CD14-positive monocyte (primary cell): ENCODE measurements at regions of chr13 and their contacts with region 1.

Region 1: GRCh38 chr13:99176309-99177276 is 24.1 kb upstream of the UBAC2 start:
- DNase-seq: peak; percentile 58 to 72 (median 67)
- H3K4me3 ChIP-seq: no peak overlapping the region
- H3K4me3 Mint-ChIP-seq: peak overlapping the region; percentile 61 to 62
- H3K27ac ChIP-seq: no peak overlapping the region
- H3K27ac Mint-ChIP-seq: peak overlapping the region in 2 of 7 donors; percentile 13 to 48
- H3K4me1 ChIP-seq: peaks cover 33 to 37% of the 10 kb centered on the region in 2 donors
- H3K4me1 Mint-ChIP-seq: peaks cover 48% of the 10 kb centered on the region
- H3K27me3 ChIP-seq: peaks cover 23 to 42% of the 10 kb centered on the region in 2 donors
- H3K27me3 Mint-ChIP-seq: peaks cover 46 to 49% (median 48%) of the 10 kb centered on the region in 3 donors
- CTCF ChIP-seq: peak; percentile 99

Region 2: DNA sequence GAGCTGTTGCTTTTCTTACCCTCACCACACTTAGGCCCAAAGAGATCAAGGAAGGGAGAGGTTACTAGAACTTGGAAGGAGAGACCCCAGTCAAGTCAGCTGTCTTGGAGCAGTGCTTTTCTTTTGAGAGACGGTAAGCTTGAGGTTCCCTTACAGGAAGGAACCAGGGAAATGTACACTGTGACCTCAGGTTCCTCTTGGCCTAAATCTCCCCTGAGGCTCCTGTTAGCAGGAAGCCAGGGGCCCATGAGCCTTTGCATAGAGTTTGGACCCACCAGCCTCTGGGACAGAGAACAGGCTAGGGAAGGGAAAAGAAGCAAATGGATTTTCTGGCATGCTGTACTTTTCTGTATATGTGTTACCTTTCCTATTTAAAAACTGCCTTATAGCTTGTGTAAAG is 87.5 kb after region 1 on chr13:
- intact Hi-C with region 1: loop called (anchors 1 to 2 kb)
- DNase-seq: peak in 2 of 3 donors; percentile 33 to 44
- H3K4me3 ChIP-seq: no peak overlapping the region
- H3K4me3 Mint-ChIP-seq: no peak overlapping the region
- H3K27ac ChIP-seq: peak overlapping the region; percentile 9 to 52
- H3K27ac Mint-ChIP-seq: peak overlapping the region in 5 of 7 donors; percentile 13 to 87 (median 76)
- H3K4me1 ChIP-seq: peaks cover 31 to 49% of the 10 kb centered on the region in 2 donors
- H3K4me1 Mint-ChIP-seq: peaks cover 55% of the 10 kb centered on the region
- H3K27me3 ChIP-seq: no peaks in the 10 kb centered on the region
- H3K27me3 Mint-ChIP-seq: no peaks in the 10 kb centered on the region
- CTCF ChIP-seq: no peak

Region 3: DNA sequence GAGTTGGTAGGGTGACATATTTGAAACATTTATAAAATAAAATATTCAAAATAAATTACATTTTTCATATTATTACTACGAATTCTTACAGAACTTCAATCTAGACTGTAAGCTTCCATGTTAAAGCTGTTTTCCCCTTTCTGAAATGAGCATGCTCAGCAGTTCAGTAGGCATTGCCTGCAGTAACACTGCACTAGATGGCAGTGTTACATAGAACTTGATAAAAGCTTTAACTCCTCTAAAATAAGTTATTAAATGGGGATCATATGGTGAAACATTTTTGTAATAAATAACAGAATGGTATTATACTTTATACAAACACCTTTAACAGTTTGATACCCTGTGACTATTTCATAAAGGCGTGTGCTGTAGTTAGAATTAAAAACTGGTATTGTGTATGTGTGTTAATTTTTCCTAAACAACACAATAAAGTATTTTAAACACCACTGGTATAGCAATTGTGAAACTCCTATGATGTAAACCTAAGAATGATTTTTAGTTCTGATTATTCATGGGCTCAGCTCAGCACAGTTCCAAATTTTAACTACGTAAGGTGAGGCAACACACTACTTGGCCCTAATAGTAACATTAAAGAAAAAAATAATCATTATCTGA is 93.1 kb after region 1 on chr13:
- intact Hi-C with region 1: loop called (anchors 1 to 2 kb)
- DNase-seq: peak; percentile 76 to 90 (median 77)
- H3K4me3 ChIP-seq: no peak overlapping the region
- H3K4me3 Mint-ChIP-seq: no peak overlapping the region
- H3K27ac ChIP-seq: peak overlapping the region; percentile 26 to 90
- H3K27ac Mint-ChIP-seq: peak overlapping the region; percentile 96 to 98 (median 97)
- H3K4me1 ChIP-seq: peaks cover 21 to 30% of the 10 kb centered on the region in 2 donors
- H3K4me1 Mint-ChIP-seq: peaks cover 39% of the 10 kb centered on the region
- H3K27me3 ChIP-seq: no peaks in the 10 kb centered on the region
- H3K27me3 Mint-ChIP-seq: peaks cover 0 to 4% (median 0%) of the 10 kb centered on the region in 3 donors
- CTCF ChIP-seq: peak; percentile 84

Region 4: DNA sequence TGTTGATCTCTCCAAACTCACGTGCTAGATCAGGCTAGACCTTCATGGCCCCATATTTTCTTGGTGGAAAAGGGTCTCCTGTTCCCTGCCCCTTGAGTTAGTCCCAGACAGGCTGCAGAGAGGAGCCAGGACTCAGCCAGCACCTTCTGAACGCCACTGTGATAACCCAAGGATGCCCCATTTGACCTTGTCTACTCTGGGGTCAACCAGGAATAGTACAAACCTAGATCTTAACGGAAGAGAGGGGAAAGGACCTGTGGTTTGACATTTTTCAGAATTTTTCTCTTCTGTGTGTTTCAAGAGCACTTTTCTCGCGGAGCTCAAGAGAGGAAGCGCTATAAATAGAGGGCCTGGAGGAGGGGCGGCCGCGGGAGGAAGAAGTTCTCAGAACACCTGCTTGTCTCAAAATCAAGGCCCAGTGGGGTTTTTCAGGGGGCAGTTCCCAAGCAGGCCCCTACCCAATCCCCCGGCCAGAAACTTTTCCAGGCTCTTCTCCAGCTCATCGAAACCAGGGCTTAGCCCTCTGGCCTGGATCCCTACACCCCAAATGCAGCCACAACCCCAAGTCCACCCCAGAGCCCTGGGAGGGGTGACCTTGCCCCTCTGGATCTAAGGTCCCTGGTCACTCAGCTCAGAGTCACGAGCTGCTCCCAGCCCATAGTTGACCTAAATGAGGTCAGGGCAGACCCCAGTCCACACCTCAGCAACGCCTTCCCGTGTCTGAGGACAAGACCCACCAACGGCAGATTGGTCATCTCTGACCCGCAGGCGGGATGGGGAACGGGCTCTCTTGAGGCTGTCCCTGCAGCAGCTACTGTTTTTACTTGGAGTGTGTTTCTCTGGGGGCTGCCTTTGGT is 249.1 kb after region 1 on chr13:
- intact Hi-C with region 1: loop called in 1 of 2 experiments (anchors 10 kb)
- DNase-seq: peak in 2 of 3 donors; percentile 51 to 55
- H3K4me3 ChIP-seq: peak overlapping the region in 1 of 3 experiments; percentile 59
- H3K4me3 Mint-ChIP-seq: peak overlapping the region; percentile 72 to 89
- H3K27ac ChIP-seq: peak overlapping the region; percentile 66 to 75
- H3K27ac Mint-ChIP-seq: peak overlapping the region; percentile 63 to 90 (median 80)
- H3K4me1 ChIP-seq: peaks cover 43 to 55% of the 10 kb centered on the region in 2 donors
- H3K4me1 Mint-ChIP-seq: peaks cover 50% of the 10 kb centered on the region
- H3K27me3 ChIP-seq: no peaks in the 10 kb centered on the region
- H3K27me3 Mint-ChIP-seq: peaks cover 17 to 25% (median 23%) of the 10 kb centered on the region in 3 donors
- CTCF ChIP-seq: no peak